ENCODE measurements at regions of chr11 and their contacts with region 1.

Region 1: GRCh38 chr11:63212742-63213141 is 30.7 kb downstream of the SLC22A25 start:
- DNase-seq: peak; percentile 19
- CTCF ChIP-seq: peak; percentile 29

Region 2: GRCh38 chr11:63032457-63032856 is 180.3 kb before region 1 on chr11:
- in situ Hi-C with region 1: loop called (anchors 10 kb)
- DNase-seq: no peak
- CTCF ChIP-seq: no peak

Measured in GM13976 (cell line).